ENCODE measurements at regions of chr2 and their contacts with region 1.

Region 1: DNA sequence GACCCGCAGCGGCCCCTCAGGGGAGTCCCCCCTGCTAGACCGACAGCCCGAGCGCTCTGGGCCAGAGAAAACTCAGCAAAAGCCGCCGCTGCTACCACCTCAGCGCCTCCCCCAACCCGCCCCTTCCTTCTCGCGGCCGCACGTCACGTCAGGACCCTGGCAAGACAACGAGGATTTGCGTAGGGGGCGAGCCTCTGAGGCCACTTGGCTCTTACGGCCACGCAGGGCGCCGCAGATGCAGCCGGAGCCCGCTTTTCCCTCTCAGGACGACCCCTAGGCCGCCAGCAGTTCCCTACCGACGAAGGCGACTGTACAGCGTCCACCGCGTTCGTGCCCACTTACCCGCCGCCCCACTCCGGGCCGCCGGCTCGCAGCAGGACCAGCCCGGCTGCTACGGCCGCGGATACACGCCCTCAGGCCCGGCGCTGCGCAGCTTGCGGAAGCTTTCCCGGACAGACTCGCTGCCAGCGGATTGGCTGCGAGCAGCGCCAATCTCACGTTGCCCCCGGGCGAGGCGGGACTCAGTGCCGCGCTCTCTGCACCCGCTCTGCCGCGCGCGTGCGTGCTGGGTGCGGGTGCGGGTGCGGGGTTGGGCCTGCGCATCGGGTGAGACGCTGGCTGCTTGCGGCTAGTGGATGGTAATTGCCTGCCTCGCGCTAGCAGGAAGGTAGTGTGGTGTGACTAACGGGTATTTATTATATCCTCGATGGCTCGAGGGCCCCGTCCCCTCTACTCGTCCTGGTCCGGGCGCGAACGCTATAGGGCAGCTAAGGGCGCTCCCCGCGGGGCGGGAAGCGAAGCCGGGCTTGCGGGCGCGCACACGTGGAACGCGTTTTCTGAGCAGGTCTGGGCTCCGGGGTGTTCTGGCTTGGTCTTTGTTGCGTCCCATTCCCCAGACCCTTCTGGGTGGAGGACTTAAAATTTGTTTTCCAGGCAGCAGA is at the starts of genes ORMDL1 and PMS1:
- DNase-seq: peak; percentile 95
- ATAC-seq: peak; percentile 90
- H3K4me3 Mint-ChIP-seq: peak within 1 kb of the TSS; percentile 94
- H3K27ac Mint-ChIP-seq: peak within 1 kb of the TSS; percentile 96
- H3K4me1 Mint-ChIP-seq: peaks cover 45% of the 10 kb centered on the region
- H3K27me3 Mint-ChIP-seq: no peaks in the 10 kb centered on the region
- CTCF ChIP-seq: no peak
- total RNA-seq, gene ORMDL1: 80.5 and 92.6 TPM in 2 replicates
- total RNA-seq, gene PMS1: 32.7 and 39.0 TPM in 2 replicates

Region 2: GRCh38 chr2:189440947-189441708 is 343.1 kb before region 1 on chr2 and contains the start of gene WDR75:
- CTCF ChIA-PET with region 1: no interaction called
- POLR2A ChIA-PET with region 1: no interaction called
- intact Hi-C with region 1: loop called (anchors 1 kb)
- DNase-seq: peak; percentile 79
- ATAC-seq: peak; percentile 94
- H3K4me3 Mint-ChIP-seq: peak within 1 kb of the TSS; percentile 98
- H3K27ac Mint-ChIP-seq: peak within 1 kb of the TSS; percentile 99
- H3K4me1 Mint-ChIP-seq: peaks cover 26% of the 10 kb centered on the region
- H3K27me3 Mint-ChIP-seq: no peaks in the 10 kb centered on the region
- CTCF ChIP-seq: no peak
- total RNA-seq, gene WDR75: 53.0 and 61.2 TPM in 2 replicates

Region 3: GRCh38 chr2:189698020-189698887 is 85.9 kb before region 1 on chr2:
- CTCF ChIA-PET with region 1: no interaction called
- POLR2A ChIA-PET with region 1: no interaction called
- intact Hi-C with region 1: no loop called
- DNase-seq: no peak
- ATAC-seq: peak; percentile 58
- H3K4me3 Mint-ChIP-seq: no peak overlapping the region
- H3K27ac Mint-ChIP-seq: no peak overlapping the region
- H3K4me1 Mint-ChIP-seq: peaks cover 2% of the 10 kb centered on the region
- H3K27me3 Mint-ChIP-seq: no peaks in the 10 kb centered on the region
- CTCF ChIP-seq: no peak

Region 4: GRCh38 chr2:189762551-189763298 is 21.5 kb before region 1 on chr2 and contains the start of gene OSGEPL1:
- CTCF ChIA-PET with region 1: interaction called, 18 read pairs
- POLR2A ChIA-PET with region 1: interaction called, 92 read pairs
- intact Hi-C with region 1: loop called (anchors 1 kb)
- DNase-seq: peak; percentile 81
- ATAC-seq: peak; percentile 93
- H3K4me3 Mint-ChIP-seq: peak within 1 kb of the TSS; percentile 95
- H3K27ac Mint-ChIP-seq: peak within 1 kb of the TSS; percentile 97
- H3K4me1 Mint-ChIP-seq: peaks cover 8% of the 10 kb centered on the region
- H3K27me3 Mint-ChIP-seq: no peaks in the 10 kb centered on the region
- CTCF ChIP-seq: no peak
- total RNA-seq, gene OSGEPL1: 10.6 and 12.3 TPM in 2 replicates

Region 5: GRCh38 chr2:190093793-190094192 is 309.6 kb after region 1 on chr2:
- CTCF ChIA-PET with region 1: no interaction called
- POLR2A ChIA-PET with region 1: no interaction called
- intact Hi-C with region 1: no loop called
- DNase-seq: no peak
- ATAC-seq: no peak
- H3K4me3 Mint-ChIP-seq: no peak overlapping the region
- H3K27ac Mint-ChIP-seq: no peak overlapping the region
- H3K4me1 Mint-ChIP-seq: no peaks in the 10 kb centered on the region
- H3K27me3 Mint-ChIP-seq: no peaks in the 10 kb centered on the region
- CTCF ChIP-seq: no peak

Region 6: DNA sequence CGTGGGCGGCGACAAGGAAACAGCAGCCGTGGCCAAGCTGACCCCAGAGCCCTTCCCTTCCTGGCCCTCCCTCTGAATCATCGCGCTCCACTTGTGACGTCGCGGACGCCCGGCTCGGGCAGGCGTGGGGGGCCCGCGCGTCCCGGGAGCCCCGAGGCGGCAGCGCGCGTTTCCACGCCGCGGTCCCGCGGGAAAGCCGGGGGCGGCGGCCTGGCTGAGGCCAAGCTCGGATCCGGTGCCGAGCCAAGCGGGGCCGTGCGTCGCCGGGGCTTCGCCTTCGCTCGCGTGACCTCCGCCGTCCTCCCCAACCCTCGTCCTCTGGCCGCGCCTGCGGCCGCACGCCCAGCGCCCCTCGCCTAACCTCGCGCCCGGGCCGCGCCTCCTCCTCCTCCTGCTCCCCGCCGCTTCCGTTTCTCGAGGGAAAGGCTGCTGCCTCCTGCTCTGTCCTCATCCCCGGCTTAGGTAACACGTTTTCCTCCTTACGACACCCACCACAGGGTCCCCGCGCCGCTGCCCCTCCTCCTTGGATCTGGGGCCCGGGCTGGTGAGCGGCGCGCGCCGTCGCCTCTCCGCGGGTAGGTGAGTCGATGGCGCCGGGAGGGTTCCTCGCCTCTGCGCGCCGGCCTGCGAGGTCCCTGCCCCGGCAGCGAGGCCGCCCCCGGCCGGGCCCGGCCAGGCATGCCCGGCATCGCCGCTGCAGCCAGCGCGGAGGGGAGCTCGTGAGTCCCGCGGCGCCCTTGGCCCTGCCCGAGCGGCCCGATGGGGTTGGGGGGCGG is 559.5 kb after region 1 on chr2 and contains the start of gene INPP1:
- CTCF ChIA-PET with region 1: no interaction called
- POLR2A ChIA-PET with region 1: no interaction called
- intact Hi-C with region 1: loop called (anchors 10 kb)
- DNase-seq: peak; percentile 45
- ATAC-seq: peak; percentile 66
- H3K4me3 Mint-ChIP-seq: peak within 1 kb of the TSS; percentile 87
- H3K27ac Mint-ChIP-seq: peak within 1 kb of the TSS; percentile 47
- H3K4me1 Mint-ChIP-seq: peaks cover 9% of the 10 kb centered on the region
- H3K27me3 Mint-ChIP-seq: no peaks in the 10 kb centered on the region
- CTCF ChIP-seq: no peak
- total RNA-seq, gene INPP1: 4.2 and 4.8 TPM in 2 replicates

Region 7: GRCh38 chr2:191020221-191020741 is 1236.1 kb after region 1 on chr2:
- CTCF ChIA-PET with region 1: no interaction called
- POLR2A ChIA-PET with region 1: no interaction called
- intact Hi-C with region 1: loop called (anchors 1 kb)
- DNase-seq: peak; percentile 97
- ATAC-seq: peak; percentile 83
- H3K4me3 Mint-ChIP-seq: no peak overlapping the region
- H3K27ac Mint-ChIP-seq: no peak overlapping the region
- H3K4me1 Mint-ChIP-seq: peaks cover 10% of the 10 kb centered on the region
- H3K27me3 Mint-ChIP-seq: no peaks in the 10 kb centered on the region
- CTCF ChIP-seq: no peak